ENCODE measurements at regions of chrX and their contacts with region 1.

Region 1: GRCh38 chrX:20066968-20067708 is 49.6 kb downstream of the MAP7D2 start:
- DNase-seq: peak; percentile 43 to 76 (median 73)
- H3K4me3 ChIP-seq: no peak overlapping the region
- H3K27ac ChIP-seq: no peak overlapping the region
- H3K4me1 ChIP-seq: peaks cover 1 to 11% (median 5%) of the 10 kb centered on the region in 4 experiments
- H3K27me3 ChIP-seq: peaks cover 0 to 9% (median 0%) of the 10 kb centered on the region in 5 experiments

Region 2: DNA sequence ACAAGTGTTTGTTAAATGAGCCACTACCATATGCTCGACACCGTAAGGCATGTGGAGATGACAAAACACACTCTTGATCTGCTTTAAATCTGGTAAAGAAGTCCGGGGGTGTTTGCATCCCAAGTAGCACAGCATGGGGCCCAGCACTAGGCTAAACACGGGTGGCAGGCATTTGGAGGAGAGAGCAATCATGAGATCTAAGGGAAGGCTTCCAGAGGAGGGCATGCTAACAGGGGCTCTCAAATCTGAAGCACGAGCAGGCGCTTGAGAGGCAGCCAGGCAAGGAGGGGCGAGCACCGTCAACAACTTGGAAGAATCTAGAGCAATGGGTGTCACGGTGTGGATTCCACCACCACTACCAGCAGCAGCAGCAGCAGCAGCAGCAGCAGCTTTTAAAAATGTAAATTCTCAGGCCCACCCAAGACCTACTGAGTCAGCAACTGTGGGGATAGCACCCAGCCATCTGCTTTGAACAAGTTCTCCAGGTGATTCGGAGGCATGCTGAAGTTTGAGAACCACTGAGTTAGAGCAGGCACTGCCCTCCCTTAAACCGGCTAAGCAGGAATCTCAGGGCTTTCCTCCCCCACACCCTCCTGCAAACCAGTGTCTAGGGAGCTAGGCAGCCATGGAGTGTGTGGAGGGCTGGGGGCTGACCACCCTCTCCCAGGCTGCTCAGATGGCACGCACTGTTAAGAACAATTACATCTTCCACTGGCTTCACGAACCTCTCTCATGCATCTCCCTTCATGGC is 481.6 kb before region 1 on chrX:
- CTCF ChIA-PET with region 1: no interaction called
- POLR2A ChIA-PET with region 1: no interaction called
- DNase-seq: no peak
- H3K4me3 ChIP-seq: no peak overlapping the region
- H3K27ac ChIP-seq: no peak overlapping the region
- H3K4me1 ChIP-seq: no peaks in the 10 kb centered on the region
- H3K27me3 ChIP-seq: peaks cover 0 to 2% (median 0%) of the 10 kb centered on the region in 5 experiments

Region 3: GRCh38 chrX:19904778-19905367 is 162.3 kb before region 1 on chrX:
- CTCF ChIA-PET with region 1: interaction called, 40 read pairs
- POLR2A ChIA-PET with region 1: interaction called, 3 read pairs
- DNase-seq: peak; percentile 48 to 75 (median 70)
- H3K4me3 ChIP-seq: no peak overlapping the region
- H3K27ac ChIP-seq: no peak overlapping the region
- H3K4me1 ChIP-seq: peaks cover 0 to 9% (median 3%) of the 10 kb centered on the region in 4 experiments
- H3K27me3 ChIP-seq: no peaks in the 10 kb centered on the region

Region 4: GRCh38 chrX:20181598-20182329 is 114.6 kb after region 1 on chrX:
- CTCF ChIA-PET with region 1: no interaction called
- POLR2A ChIA-PET with region 1: no interaction called
- DNase-seq: peak; percentile 31 to 90 (median 85)
- H3K4me3 ChIP-seq: peak overlapping the region in 1 of 7 experiments; percentile 16
- H3K27ac ChIP-seq: peak overlapping the region in 1 of 2 experiments; percentile 40
- H3K4me1 ChIP-seq: peaks cover 0 to 15% (median 2%) of the 10 kb centered on the region in 4 experiments
- H3K27me3 ChIP-seq: peaks cover 0 to 14% (median 0%) of the 10 kb centered on the region in 5 experiments

Region 5: DNA sequence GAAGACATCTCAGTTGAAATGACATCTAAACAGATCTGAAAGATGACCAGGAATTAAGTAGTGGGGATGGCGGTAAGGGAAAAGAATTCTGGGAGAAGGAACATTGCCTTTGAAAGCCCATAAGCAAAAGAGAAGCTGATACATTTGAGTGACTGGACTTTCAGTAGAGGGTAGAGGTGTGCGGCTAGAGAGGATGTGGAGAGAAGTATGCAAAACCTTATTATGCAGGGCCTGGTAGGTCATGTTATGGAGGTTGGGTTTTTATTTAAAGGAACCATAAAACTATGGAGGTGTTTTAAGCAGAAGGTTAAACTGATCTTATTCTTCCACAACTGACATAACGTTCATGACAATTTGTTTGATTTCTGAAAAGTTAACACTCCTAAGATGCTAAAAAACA is 163.3 kb after region 1 on chrX:
- CTCF ChIA-PET with region 1: no interaction called
- POLR2A ChIA-PET with region 1: no interaction called
- DNase-seq: no peak
- H3K4me3 ChIP-seq: no peak overlapping the region
- H3K27ac ChIP-seq: no peak overlapping the region
- H3K4me1 ChIP-seq: peaks cover 0 to 2% (median 0%) of the 10 kb centered on the region in 4 experiments
- H3K27me3 ChIP-seq: peaks cover 0 to 6% (median 0%) of the 10 kb centered on the region in 5 experiments

Region 6: GRCh38 chrX:20320461-20321159 is 253.5 kb after region 1 on chrX:
- CTCF ChIA-PET with region 1: no interaction called
- POLR2A ChIA-PET with region 1: no interaction called
- DNase-seq: peak; percentile 7 to 68 (median 60)
- H3K4me3 ChIP-seq: peak overlapping the region in 2 of 7 experiments; percentile 11 to 23
- H3K27ac ChIP-seq: no peak overlapping the region
- H3K4me1 ChIP-seq: peaks cover 0 to 11% (median 6%) of the 10 kb centered on the region in 4 experiments
- H3K27me3 ChIP-seq: peaks cover 0 to 16% (median 0%) of the 10 kb centered on the region in 5 experiments